ENCODE measurements at regions of chr12 and their contacts with region 1.

Region 1: DNA sequence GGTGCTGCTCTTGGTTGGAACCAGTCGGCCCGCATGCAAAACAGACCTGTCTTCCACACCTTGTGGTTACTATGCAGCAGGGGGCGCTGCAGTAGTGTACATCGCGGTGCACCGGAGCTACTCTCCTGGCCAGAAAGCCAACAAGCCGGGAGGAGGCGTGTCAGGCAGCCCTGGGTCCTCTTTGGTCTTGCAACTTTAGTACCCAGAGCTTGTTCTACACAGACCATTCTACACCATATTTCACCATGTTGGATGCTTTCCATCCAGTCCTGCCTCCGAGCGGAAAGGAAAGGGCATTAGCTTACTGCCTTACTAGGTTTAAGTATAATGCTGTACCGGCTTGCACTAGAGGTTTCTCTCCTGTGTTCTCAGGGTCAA is 927 bp upstream of the TMTC2 start:
- DNase-seq: peak; percentile 97
- H3K4me3 ChIP-seq: peak overlapping the region; percentile 68 to 96 (median 74)
- H3K27ac ChIP-seq: peak overlapping the region; percentile 93 to 98 (median 95)
- H3K4me1 ChIP-seq: peaks cover 0 to 40% (median 16%) of the 10 kb centered on the region in 4 donors
- H3K27me3 ChIP-seq: no peaks in the 10 kb centered on the region
- CTCF ChIP-seq: peak; percentile 82 to 94 (median 84)
- EP300 ChIP-seq: no peak
- POLR2A ChIP-seq: no peak

Region 2: GRCh38 chr12:83823431-83823963 is 1137.7 kb after region 1 on chr12:
- in situ Hi-C with region 1: no loop called
- intact Hi-C with region 1: loop called (anchors 10 kb)
- DNase-seq: peak; percentile 21
- H3K4me3 ChIP-seq: no peak overlapping the region
- H3K27ac ChIP-seq: no peak overlapping the region
- H3K4me1 ChIP-seq: peaks cover 0 to 3% (median 0%) of the 10 kb centered on the region in 4 donors
- H3K27me3 ChIP-seq: no peaks in the 10 kb centered on the region
- CTCF ChIP-seq: peak in 4 of 5 experiments; percentile 13 to 31 (median 25)
- EP300 ChIP-seq: no peak
- POLR2A ChIP-seq: no peak